ENCODE measurements at regions of chr6 and their contacts with region 1.

Region 1: GRCh38 chr6:107716688-107717089 is 107.4 kb downstream of the SCML4 start:
- DNase-seq: peak; percentile 70
- H3K4me3 Mint-ChIP-seq: peak overlapping the region; percentile 69
- H3K27ac Mint-ChIP-seq: peak overlapping the region; percentile 89
- H3K4me1 Mint-ChIP-seq: peaks cover 55% of the 10 kb centered on the region
- H3K27me3 Mint-ChIP-seq: peaks cover 3% of the 10 kb centered on the region

Region 2: GRCh38 chr6:107731422-107732319 is 15.0 kb after region 1 on chr6:
- intact Hi-C with region 1: loop called (anchors 1 kb)
- DNase-seq: no peak
- H3K4me3 Mint-ChIP-seq: peak overlapping the region; percentile 75
- H3K27ac Mint-ChIP-seq: peak overlapping the region; percentile 21
- H3K4me1 Mint-ChIP-seq: peaks cover 78% of the 10 kb centered on the region
- H3K27me3 Mint-ChIP-seq: peaks cover 19% of the 10 kb centered on the region

Region 3: DNA sequence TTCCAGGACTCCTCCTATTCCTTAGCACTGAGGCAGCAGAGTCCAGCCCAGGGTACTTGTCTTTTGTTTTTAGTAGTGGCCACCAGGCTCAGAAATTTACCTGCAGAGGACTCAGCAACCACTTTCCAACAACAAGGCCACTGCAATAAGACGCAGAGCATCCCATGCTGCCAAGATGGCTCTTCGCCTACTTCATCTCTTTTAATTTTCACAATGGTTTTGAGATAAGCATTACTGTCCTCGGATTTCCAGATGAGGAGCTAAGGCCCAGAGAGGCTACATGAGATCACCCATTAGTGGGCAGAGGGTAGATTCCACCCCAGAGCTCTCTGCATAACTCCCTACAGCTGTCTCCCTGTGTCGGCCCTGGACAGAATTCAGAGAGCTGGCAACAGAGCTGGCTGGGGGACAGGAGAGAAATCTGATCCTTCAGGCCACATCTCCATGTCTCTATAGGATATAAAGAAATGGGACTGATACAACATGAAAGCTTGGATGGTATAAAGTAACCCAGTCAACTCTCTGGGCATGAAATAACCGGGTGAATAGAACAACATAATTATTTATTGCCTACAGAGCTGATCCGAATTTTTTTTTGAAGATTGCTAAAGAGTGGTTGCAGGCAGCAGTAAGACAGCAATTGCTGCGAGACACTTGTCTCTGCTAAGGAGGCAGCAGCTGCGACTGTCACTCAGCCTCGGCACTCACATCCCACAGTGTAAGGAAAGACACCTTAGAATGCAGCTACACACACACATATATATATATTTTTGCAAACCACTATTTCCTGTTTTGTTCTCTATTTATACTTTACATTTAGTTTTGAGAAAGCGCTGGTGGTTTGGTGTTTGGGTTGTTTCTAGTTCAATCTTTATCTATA is 70.3 kb after region 1 on chr6:
- intact Hi-C with region 1: loop called (anchors 2 kb)
- DNase-seq: peak; percentile 40
- H3K4me3 Mint-ChIP-seq: peak overlapping the region; percentile 71
- H3K27ac Mint-ChIP-seq: no peak overlapping the region
- H3K4me1 Mint-ChIP-seq: peaks cover 57% of the 10 kb centered on the region
- H3K27me3 Mint-ChIP-seq: peaks cover 8% of the 10 kb centered on the region

Region 4: GRCh38 chr6:108074359-108075144 is 357.9 kb after region 1 on chr6 and contains the start of gene OSTM1:
- intact Hi-C with region 1: loop called (anchors 5 kb)
- DNase-seq: peak; percentile 92
- H3K4me3 Mint-ChIP-seq: peak within 1 kb of the TSS; percentile 85
- H3K27ac Mint-ChIP-seq: peak within 1 kb of the TSS; percentile 80
- H3K4me1 Mint-ChIP-seq: peaks cover 12% of the 10 kb centered on the region
- H3K27me3 Mint-ChIP-seq: peaks cover 25% of the 10 kb centered on the region
- total RNA-seq, gene OSTM1: 19.9 and 22.5 TPM in 2 replicates